ENCODE measurements at regions of chr11 and their contacts with region 1.

Region 1: GRCh38 chr11:62665075-62665598 is at the starts of genes C11orf98 and CSKMT:
- DNase-seq: no peak
- ATAC-seq: peak; percentile 91
- H3K4me3 ChIP-seq: peak within 1 kb of the TSS; percentile 95
- H3K27ac ChIP-seq: peak within 1 kb of the TSS; percentile 95
- H3K4me1 ChIP-seq: peaks cover 13% of the 10 kb centered on the region
- H3K27me3 ChIP-seq: no peaks in the 10 kb centered on the region
- CTCF ChIP-seq: no peak
- EP300 ChIP-seq: no peak
- POLR2A ChIP-seq: peak; percentile 96
- RAD21 ChIP-seq: no peak
- polyA plus RNA-seq, gene C11orf98: 134 to 199 TPM
- polyA plus RNA-seq, gene CSKMT: 17.0 to 20.4 TPM

Region 2: GRCh38 chr11:62508268-62509058 is 156.7 kb before region 1 on chr11:
- CTCF ChIA-PET with region 1: no interaction called
- POLR2A ChIA-PET with region 1: no interaction called
- RAD21 ChIA-PET with region 1: no interaction called
- SMC1A ChIA-PET with region 1: no interaction called
- in situ Hi-C with region 1: no loop called
- intact Hi-C with region 1: no loop called
- DNase-seq: no peak
- ATAC-seq: peak; percentile 85
- H3K4me3 ChIP-seq: no peak overlapping the region
- H3K27ac ChIP-seq: no peak overlapping the region
- H3K4me1 ChIP-seq: no peaks in the 10 kb centered on the region
- H3K27me3 ChIP-seq: peaks cover 0 to 2% of the 10 kb centered on the region in 2 experiments; a peak in 1 of 4 replicates
- CTCF ChIP-seq: peak; percentile 31 to 53 (median 34); a peak in 5 of 6 replicates
- EP300 ChIP-seq: no peak
- POLR2A ChIP-seq: no peak
- RAD21 ChIP-seq: no peak

Region 3: GRCh38 chr11:62601394-62602140 is 63.6 kb before region 1 on chr11 and contains the start of gene MTA2:
- CTCF ChIA-PET with region 1: interaction called, 4 read pairs
- POLR2A ChIA-PET with region 1: interaction called, 16 read pairs
- RAD21 ChIA-PET with region 1: interaction called, 7 read pairs
- SMC1A ChIA-PET with region 1: interaction called, 4 read pairs
- in situ Hi-C with region 1: no loop called
- intact Hi-C with region 1: no loop called
- DNase-seq: peak; percentile 87
- ATAC-seq: peak; percentile 92
- H3K4me3 ChIP-seq: peak within 1 kb of the TSS; percentile 91
- H3K27ac ChIP-seq: peak within 1 kb of the TSS; percentile 97
- H3K4me1 ChIP-seq: peaks cover 19% of the 10 kb centered on the region
- H3K27me3 ChIP-seq: no peaks in the 10 kb centered on the region
- CTCF ChIP-seq: 0 out of 6 replicates have a peak, but pooled peaks of 1 of the 3 experiments have one; percentile 7
- EP300 ChIP-seq: no peak
- POLR2A ChIP-seq: peak; percentile 85
- RAD21 ChIP-seq: no peak
- polyA plus RNA-seq, gene MTA2: 6.7 to 6.8 TPM

Region 4: GRCh38 chr11:62645956-62646824 is 18.9 kb before region 1 on chr11 and contains the start of gene GANAB:
- CTCF ChIA-PET with region 1: interaction called, 6 read pairs
- POLR2A ChIA-PET with region 1: interaction called, 295 read pairs
- RAD21 ChIA-PET with region 1: interaction called, 9 read pairs
- SMC1A ChIA-PET with region 1: interaction called, 4 read pairs
- in situ Hi-C with region 1: no loop called
- intact Hi-C with region 1: no loop called
- DNase-seq: peak; percentile 82
- ATAC-seq: peak; percentile 99
- H3K4me3 ChIP-seq: peak within 1 kb of the TSS; percentile 98
- H3K27ac ChIP-seq: peak within 1 kb of the TSS; percentile 93
- H3K4me1 ChIP-seq: peaks cover 4% of the 10 kb centered on the region; the same call in 1 of the 2 replicates
- H3K27me3 ChIP-seq: no peaks in the 10 kb centered on the region
- CTCF ChIP-seq: no peak
- EP300 ChIP-seq: no peak
- POLR2A ChIP-seq: peak; percentile 94
- RAD21 ChIP-seq: no peak
- polyA plus RNA-seq, gene GANAB: 4.5 to 6.4 TPM

Region 5: DNA sequence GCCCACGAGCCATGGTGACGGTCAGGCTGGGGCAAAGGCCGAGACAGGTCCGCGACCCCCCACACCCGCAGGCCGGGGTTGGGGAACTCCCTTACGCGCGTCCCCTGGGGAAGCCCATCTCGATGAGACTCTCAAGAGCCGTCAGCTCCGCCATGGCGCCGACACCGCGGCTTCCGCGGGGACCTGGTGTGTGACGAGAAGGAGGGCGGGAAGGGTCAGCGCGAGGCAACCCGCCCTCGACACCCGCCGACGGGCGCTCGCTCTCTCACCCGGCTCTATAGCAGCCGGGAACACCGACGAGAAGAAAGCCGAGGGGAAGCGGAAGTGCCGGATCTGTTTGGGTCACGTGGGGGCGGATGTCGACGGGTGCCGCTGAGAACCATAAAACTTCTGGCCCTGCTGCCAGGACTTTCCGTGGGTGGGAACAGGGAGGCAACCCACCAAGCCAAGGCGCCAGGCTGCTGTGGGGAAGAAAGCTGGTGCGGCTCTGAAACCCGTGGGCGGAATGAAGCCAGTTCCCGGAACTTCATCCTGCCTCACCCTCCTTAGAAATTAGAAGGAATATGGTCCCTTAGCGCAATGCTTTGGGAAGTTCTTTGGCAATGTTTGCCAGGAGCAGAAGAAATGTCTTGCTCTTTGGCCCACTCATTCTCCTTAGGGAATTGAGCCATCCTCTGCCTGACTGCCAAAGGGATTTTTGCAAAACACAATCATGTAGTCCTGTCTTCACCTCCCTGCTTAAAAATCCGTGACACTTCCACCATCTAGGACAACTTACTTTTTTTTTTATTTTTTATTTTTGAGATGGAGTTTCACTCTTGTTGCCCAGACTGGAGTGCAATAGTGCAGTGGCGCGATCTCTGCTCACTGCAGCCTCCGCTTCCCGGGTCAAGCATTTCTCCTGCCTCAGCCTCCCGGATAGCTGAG is 13.9 kb after region 1 on chr11 and contains the start of gene UBXN1:
- CTCF ChIA-PET with region 1: interaction called, 6 read pairs
- POLR2A ChIA-PET with region 1: interaction called, 83 read pairs
- RAD21 ChIA-PET with region 1: interaction called, 8 read pairs
- SMC1A ChIA-PET with region 1: interaction called, 7 read pairs
- in situ Hi-C with region 1: no loop called
- intact Hi-C with region 1: no loop called
- DNase-seq: no peak
- ATAC-seq: peak; percentile 90
- H3K4me3 ChIP-seq: peak within 1 kb of the TSS; percentile 89
- H3K27ac ChIP-seq: peak within 1 kb of the TSS; percentile 94
- H3K4me1 ChIP-seq: peaks cover 11% of the 10 kb centered on the region
- H3K27me3 ChIP-seq: no peaks in the 10 kb centered on the region
- CTCF ChIP-seq: no peak
- EP300 ChIP-seq: peak in 1 of 2 experiments; percentile 42; a peak in 1 of 4 replicates
- POLR2A ChIP-seq: peak; percentile 94
- RAD21 ChIP-seq: no peak
- polyA plus RNA-seq, gene UBXN1: 7.0 to 20.7 TPM

Region 6: DNA sequence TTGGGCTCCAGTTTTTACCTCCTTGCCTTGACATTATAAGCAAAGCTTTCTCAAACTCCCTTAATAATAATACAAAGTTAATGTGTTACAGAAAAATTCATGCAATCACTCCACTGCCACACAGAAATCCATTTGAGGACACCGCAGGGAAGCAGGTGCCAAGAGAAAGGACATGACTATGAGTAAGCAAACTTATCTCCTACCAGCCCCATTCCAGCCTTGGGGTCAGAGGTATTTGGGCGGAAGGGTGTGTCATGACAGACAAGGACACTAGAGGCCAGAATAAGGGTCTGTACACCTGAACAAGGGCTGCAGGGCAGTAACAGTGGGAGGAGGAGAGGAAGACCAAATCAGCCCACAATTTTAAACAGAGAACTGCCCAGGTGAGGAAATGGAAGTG is 48.2 kb after region 1 on chr11:
- CTCF ChIA-PET with region 1: no interaction called
- POLR2A ChIA-PET with region 1: interaction called, 18 read pairs
- RAD21 ChIA-PET with region 1: interaction called, 8 read pairs
- SMC1A ChIA-PET with region 1: no interaction called
- in situ Hi-C with region 1: no loop called
- intact Hi-C with region 1: no loop called
- DNase-seq: no peak
- ATAC-seq: no peak
- H3K4me3 ChIP-seq: 0 out of 2 replicates have a peak overlapping the region, but pooled peaks have one; percentile 13
- H3K27ac ChIP-seq: no peak overlapping the region
- H3K4me1 ChIP-seq: peaks cover 22% of the 10 kb centered on the region
- H3K27me3 ChIP-seq: no peaks in the 10 kb centered on the region
- CTCF ChIP-seq: no peak
- EP300 ChIP-seq: no peak
- POLR2A ChIP-seq: no peak
- RAD21 ChIP-seq: no peak

Region 7: DNA sequence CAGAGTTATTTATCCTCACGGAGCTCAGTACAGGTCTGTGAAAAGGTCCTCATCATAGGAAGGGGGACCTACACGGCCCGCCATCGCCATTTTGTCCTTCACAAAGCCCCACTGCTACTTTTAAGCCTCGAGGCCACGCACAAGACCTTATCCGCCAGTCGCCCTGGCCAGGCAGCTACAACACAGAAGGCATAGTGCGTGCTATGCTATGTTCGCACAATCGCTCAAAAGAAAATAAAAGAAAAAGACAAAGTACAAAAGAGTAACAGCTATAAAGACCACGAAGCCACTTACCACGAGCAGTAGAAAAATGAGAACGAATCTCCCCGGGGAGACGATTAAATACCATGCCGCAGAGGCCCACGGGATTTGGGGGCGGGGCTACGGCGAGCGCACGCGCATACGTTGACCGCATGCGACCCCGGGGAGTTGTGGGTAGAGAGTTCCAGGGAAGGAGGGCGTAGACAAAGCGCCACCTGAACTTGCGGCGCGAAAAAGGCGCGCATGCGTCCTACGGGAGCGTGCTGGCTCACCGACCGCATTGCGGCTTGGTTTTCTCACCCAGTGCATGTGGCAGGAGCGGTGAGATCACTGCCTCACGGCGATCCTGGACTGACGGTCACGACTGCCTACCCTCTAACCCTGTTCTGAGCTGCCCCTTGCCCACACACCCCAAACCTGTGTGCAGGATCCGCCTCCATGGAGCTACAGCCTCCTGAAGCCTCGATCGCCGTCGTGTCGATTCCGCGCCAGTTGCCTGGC is 190.6 kb after region 1 on chr11:
- CTCF ChIA-PET with region 1: no interaction called
- POLR2A ChIA-PET with region 1: interaction called, 11 read pairs
- RAD21 ChIA-PET with region 1: interaction called, 3 read pairs
- SMC1A ChIA-PET with region 1: interaction called, 6 read pairs
- in situ Hi-C with region 1: no loop called
- intact Hi-C with region 1: loop called (anchors 5 kb)
- DNase-seq: peak; percentile 97
- ATAC-seq: peak; percentile 86
- H3K4me3 ChIP-seq: peak overlapping the region; percentile 98
- H3K27ac ChIP-seq: peak overlapping the region; percentile 97
- H3K4me1 ChIP-seq: peaks cover 20% of the 10 kb centered on the region
- H3K27me3 ChIP-seq: no peaks in the 10 kb centered on the region
- CTCF ChIP-seq: no peak
- EP300 ChIP-seq: peak in 1 of 2 experiments; percentile 42; a peak in 2 of 4 replicates
- POLR2A ChIP-seq: peak; percentile 99
- RAD21 ChIP-seq: no peak